PC-9 (cell line): ENCODE measurements at regions of chr19 and their contacts with region 1.

Region 1: DNA sequence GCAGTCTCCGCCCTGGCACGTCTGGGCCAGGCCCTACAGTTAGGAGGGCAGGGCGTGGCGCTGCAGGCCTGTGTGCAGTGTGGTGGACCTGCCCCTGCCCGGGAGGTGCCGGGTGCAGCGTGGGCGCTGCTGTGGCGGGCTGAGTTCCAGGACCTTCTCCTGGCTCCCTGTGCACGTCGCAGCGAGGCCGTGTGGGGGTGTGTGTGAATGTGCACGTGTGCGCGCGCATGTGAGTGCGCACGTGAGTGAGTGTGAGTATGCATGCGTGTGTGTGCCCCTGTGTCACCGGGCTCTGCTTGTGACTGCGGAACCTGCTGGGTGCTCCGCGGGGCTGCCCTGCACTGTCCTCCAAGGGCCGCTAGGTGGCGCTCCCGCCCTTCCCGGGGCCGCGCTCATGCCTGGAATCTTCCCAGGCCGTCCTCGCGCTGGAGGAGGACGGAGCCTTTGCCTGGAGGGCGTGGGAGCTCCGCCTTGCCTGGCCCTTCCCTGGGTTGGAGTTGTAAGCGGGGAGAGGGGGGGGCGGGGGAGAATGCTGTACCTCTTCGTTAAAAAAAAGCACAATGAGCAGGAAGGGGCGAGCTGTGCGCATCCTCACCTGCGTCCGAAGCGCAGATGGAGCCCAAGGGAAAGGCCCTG is 79.3 kb downstream of the KDM4B start:
- DNase-seq: peak in 1 of 2 experiments; percentile 82
- H3K4me3 ChIP-seq: no peak overlapping the region
- H3K27ac ChIP-seq: no peak overlapping the region
- H3K4me1 ChIP-seq: peaks cover 36% of the 10 kb centered on the region
- H3K27me3 ChIP-seq: no peaks in the 10 kb centered on the region
- CTCF ChIP-seq: peak; percentile 88

Region 2: DNA sequence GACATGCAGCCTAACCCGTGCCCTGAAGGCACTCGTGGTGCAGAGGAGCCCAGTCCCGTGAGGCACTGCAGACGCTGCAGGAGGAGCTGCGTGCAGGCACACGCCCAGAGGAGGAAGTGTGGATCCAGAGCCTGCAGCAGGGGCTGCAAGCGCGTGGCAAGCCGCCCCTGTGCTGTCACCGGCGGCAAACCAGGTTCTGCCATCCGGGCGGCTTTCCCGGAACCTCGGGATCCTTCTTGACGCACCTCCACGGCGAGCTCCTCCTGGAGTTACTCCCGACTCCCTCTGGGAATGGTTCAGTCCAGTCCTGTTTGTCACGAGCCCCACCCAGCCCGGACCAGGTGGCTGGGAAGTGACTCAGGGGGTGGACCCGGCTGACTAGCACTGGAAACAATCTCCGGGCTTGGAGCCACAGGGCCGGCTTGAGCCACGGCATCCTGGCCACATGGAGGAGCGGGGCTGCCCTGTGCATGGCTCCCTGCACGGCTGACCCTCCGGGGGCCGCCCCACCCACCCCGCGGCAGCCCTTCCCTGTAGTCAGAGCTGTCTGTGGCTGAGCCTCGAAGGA is 334.7 kb before region 1 on chr19:
- CTCF ChIA-PET with region 1: interaction called, 11 read pairs
- POLR2A ChIA-PET with region 1: no interaction called
- intact Hi-C with region 1: no loop called
- DNase-seq: peak; percentile 81 to 94
- H3K4me3 ChIP-seq: no peak overlapping the region
- H3K27ac ChIP-seq: peak overlapping the region; percentile 32; the same call in 1 of the 2 replicates
- H3K4me1 ChIP-seq: peaks cover 16% of the 10 kb centered on the region
- H3K27me3 ChIP-seq: no peaks in the 10 kb centered on the region
- CTCF ChIP-seq: no peak

Region 3: GRCh38 chr19:5128251-5128935 is 80.2 kb after region 1 on chr19:
- CTCF ChIA-PET with region 1: interaction called, 13 read pairs
- POLR2A ChIA-PET with region 1: no interaction called
- intact Hi-C with region 1: no loop called
- DNase-seq: no peak
- H3K4me3 ChIP-seq: no peak overlapping the region
- H3K27ac ChIP-seq: no peak overlapping the region
- H3K4me1 ChIP-seq: peaks cover 11% of the 10 kb centered on the region; the same call in 1 of the 2 replicates
- H3K27me3 ChIP-seq: no peaks in the 10 kb centered on the region
- CTCF ChIP-seq: no peak

Region 4: DNA sequence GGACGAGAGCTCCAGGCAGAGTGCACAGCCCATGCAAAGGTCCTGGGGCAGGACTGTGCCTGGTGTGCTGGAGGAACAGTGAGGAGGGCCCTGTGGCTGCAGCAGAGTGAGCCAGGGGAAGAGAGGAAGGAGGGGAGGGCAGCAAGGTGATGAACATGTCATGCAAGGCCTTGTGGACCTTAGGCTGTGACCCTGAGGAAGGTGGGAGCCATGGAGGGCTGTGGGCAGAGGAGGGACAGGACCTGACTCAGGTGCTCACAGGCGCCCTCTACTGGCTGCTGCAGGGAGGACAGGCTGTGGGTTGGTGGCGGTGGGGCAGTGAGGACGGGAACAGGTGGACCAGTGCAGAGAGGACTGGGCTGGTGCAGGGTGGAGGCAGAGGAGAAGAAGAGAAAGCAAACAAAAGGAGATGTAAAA is 122.1 kb after region 1 on chr19:
- CTCF ChIA-PET with region 1: interaction called, 6 read pairs
- POLR2A ChIA-PET with region 1: interaction called, 7 read pairs
- intact Hi-C with region 1: loop called (anchors 5 kb)
- DNase-seq: no peak
- H3K4me3 ChIP-seq: no peak overlapping the region
- H3K27ac ChIP-seq: peak overlapping the region; percentile 100
- H3K4me1 ChIP-seq: peaks cover 36% of the 10 kb centered on the region
- H3K27me3 ChIP-seq: no peaks in the 10 kb centered on the region
- CTCF ChIP-seq: peak; percentile 67

Region 5: GRCh38 chr19:5271141-5271540 is 222.9 kb after region 1 on chr19:
- CTCF ChIA-PET with region 1: no interaction called
- POLR2A ChIA-PET with region 1: interaction called, 18 read pairs
- intact Hi-C with region 1: no loop called
- DNase-seq: no peak
- H3K4me3 ChIP-seq: no peak overlapping the region
- H3K27ac ChIP-seq: no peak overlapping the region
- H3K4me1 ChIP-seq: no peaks in the 10 kb centered on the region
- H3K27me3 ChIP-seq: no peaks in the 10 kb centered on the region
- CTCF ChIP-seq: no peak; the same call in 1 of the 2 replicates

Region 6: GRCh38 chr19:5572558-5573273 is 524.5 kb after region 1 on chr19:
- CTCF ChIA-PET with region 1: no interaction called
- POLR2A ChIA-PET with region 1: interaction called, 7 read pairs
- intact Hi-C with region 1: loop called (anchors 2 kb)
- DNase-seq: peak; percentile 63 to 75
- H3K4me3 ChIP-seq: no peak overlapping the region
- H3K27ac ChIP-seq: peak overlapping the region; percentile 73
- H3K4me1 ChIP-seq: peaks cover 24% of the 10 kb centered on the region
- H3K27me3 ChIP-seq: no peaks in the 10 kb centered on the region
- CTCF ChIP-seq: no peak

Region 7: GRCh38 chr19:5577785-5578493 is 529.7 kb after region 1 on chr19:
- CTCF ChIA-PET with region 1: no interaction called
- POLR2A ChIA-PET with region 1: interaction called, 7 read pairs
- intact Hi-C with region 1: loop called (anchors 2 kb)
- DNase-seq: peak in 1 of 2 experiments; percentile 59
- H3K4me3 ChIP-seq: no peak overlapping the region
- H3K27ac ChIP-seq: no peak overlapping the region
- H3K4me1 ChIP-seq: peaks cover 13% of the 10 kb centered on the region
- H3K27me3 ChIP-seq: no peaks in the 10 kb centered on the region
- CTCF ChIP-seq: peak; percentile 91